ENCODE measurements at regions of chr5 and their contacts with region 1.

Region 1: DNA sequence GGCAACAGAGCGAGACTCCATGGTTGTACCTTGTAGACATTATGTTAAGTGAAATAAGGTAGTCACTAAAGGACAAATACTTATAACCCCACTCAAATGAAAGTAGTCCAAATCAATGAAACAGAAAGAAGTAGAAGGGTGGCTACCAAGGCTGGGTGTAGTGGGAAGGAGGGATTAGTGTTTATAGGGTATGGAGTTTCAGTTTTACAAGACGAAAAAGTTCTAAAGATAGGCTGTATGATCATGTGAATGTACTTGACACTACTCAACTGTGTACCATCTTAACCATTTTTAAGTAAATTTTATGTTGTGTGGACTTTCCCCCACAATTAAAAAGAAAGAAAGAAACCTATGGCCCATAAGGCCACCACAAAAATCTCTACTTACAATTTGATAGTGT is 32.2 kb downstream of the ALDH7A1 start:
- DNase-seq: no peak
- H3K4me3 ChIP-seq: no peak overlapping the region
- H3K27ac ChIP-seq: no peak overlapping the region
- H3K4me1 ChIP-seq: no peaks in the 10 kb centered on the region
- H3K27me3 ChIP-seq: no peaks in the 10 kb centered on the region
- CTCF ChIP-seq: no peak

Region 2: GRCh38 chr5:126354012-126354857 is 208.6 kb before region 1 on chr5:
- CTCF ChIA-PET with region 1: no interaction called
- POLR2A ChIA-PET with region 1: interaction called, 10 read pairs
- intact Hi-C with region 1: no loop called
- DNase-seq: peak; percentile 62
- H3K4me3 ChIP-seq: no peak overlapping the region
- H3K27ac ChIP-seq: no peak overlapping the region
- H3K4me1 ChIP-seq: no peaks in the 10 kb centered on the region
- H3K27me3 ChIP-seq: no peaks in the 10 kb centered on the region
- CTCF ChIP-seq: peak; percentile 53

Measured in A673 (cell line).